PC-9 (cell line): ENCODE measurements at regions of chr3 and their contacts with region 1.

Region 1: GRCh38 chr3:170021083-170021482 is 16.7 kb upstream of the GPR160 start:
- DNase-seq: no peak
- H3K4me3 ChIP-seq: no peak overlapping the region
- H3K27ac ChIP-seq: no peak overlapping the region
- H3K4me1 ChIP-seq: no peaks in the 10 kb centered on the region
- H3K27me3 ChIP-seq: no peaks in the 10 kb centered on the region
- CTCF ChIP-seq: 0 out of 2 replicates have a peak, but pooled peaks have one; percentile 23

Region 2: GRCh38 chr3:169846458-169847193 is 174.5 kb before region 1 on chr3:
- CTCF ChIA-PET with region 1: no interaction called
- POLR2A ChIA-PET with region 1: no interaction called
- intact Hi-C with region 1: no loop called
- DNase-seq: peak; percentile 60 to 65
- H3K4me3 ChIP-seq: no peak overlapping the region
- H3K27ac ChIP-seq: no peak overlapping the region
- H3K4me1 ChIP-seq: no peaks in the 10 kb centered on the region
- H3K27me3 ChIP-seq: no peaks in the 10 kb centered on the region
- CTCF ChIP-seq: no peak

Region 3: GRCh38 chr3:170062769-170063168 is 41.7 kb after region 1 on chr3:
- CTCF ChIA-PET with region 1: no interaction called
- POLR2A ChIA-PET with region 1: interaction called, 11 read pairs
- intact Hi-C with region 1: no loop called
- DNase-seq: no peak
- H3K4me3 ChIP-seq: no peak overlapping the region
- H3K27ac ChIP-seq: no peak overlapping the region
- H3K4me1 ChIP-seq: no peaks in the 10 kb centered on the region
- H3K27me3 ChIP-seq: no peaks in the 10 kb centered on the region
- CTCF ChIP-seq: peak; percentile 39; the same call in 1 of the 2 replicates